ENCODE measurements at regions of chr5 and their contacts with region 1.

Region 1: GRCh38 chr5:175729829-175730277 is 72.0 kb downstream of the HRH2 start:
- DNase-seq: peak; percentile 66 to 78 (median 68)
- H3K4me3 ChIP-seq: no peak overlapping the region
- H3K4me3 Mint-ChIP-seq: peak overlapping the region in 1 of 2 donors; percentile 57
- H3K27ac ChIP-seq: no peak overlapping the region
- H3K27ac Mint-ChIP-seq: peak overlapping the region in 1 of 7 donors; percentile 9
- H3K4me1 ChIP-seq: peaks cover 0 to 5% of the 10 kb centered on the region in 2 donors
- H3K4me1 Mint-ChIP-seq: peaks cover 6% of the 10 kb centered on the region
- H3K27me3 ChIP-seq: peaks cover 0 to 12% of the 10 kb centered on the region in 2 donors
- H3K27me3 Mint-ChIP-seq: peaks cover 23 to 41% (median 25%) of the 10 kb centered on the region in 3 donors
- CTCF ChIP-seq: peak; percentile 93

Region 2: DNA sequence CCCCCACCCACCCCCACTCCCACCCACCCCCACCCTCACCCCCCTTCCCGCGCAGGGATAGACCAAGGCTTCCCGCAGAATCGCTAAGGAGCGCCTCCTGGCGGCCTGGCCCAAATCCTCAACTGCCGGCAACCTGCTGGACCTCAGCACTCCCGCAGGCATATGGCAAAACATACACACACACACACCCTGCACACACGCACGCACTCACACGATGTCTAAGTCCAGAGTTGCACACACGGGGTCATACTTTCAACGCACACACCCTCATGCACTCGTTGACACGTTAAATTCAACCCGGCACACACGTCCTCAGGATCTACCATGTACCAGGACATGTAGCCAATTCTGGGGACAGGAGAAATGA is 143.2 kb after region 1 on chr5:
- intact Hi-C with region 1: loop called (anchors 10 kb)
- DNase-seq: peak; percentile 15 to 31 (median 31)
- H3K4me3 ChIP-seq: no peak overlapping the region
- H3K4me3 Mint-ChIP-seq: peak overlapping the region; percentile 42 to 80
- H3K27ac ChIP-seq: no peak overlapping the region
- H3K27ac Mint-ChIP-seq: no peak overlapping the region
- H3K4me1 ChIP-seq: peaks cover 14 to 16% of the 10 kb centered on the region in 2 donors
- H3K4me1 Mint-ChIP-seq: peaks cover 11% of the 10 kb centered on the region
- H3K27me3 ChIP-seq: peaks cover 24 to 72% of the 10 kb centered on the region in 2 donors
- H3K27me3 Mint-ChIP-seq: peaks cover 49 to 79% (median 51%) of the 10 kb centered on the region in 3 donors
- CTCF ChIP-seq: peak; percentile 45

Region 3: GRCh38 chr5:176658007-176658599 is 928.2 kb after region 1 on chr5:
- intact Hi-C with region 1: loop called in 1 of 2 experiments (anchors 10 kb)
- DNase-seq: peak; percentile 47 to 62 (median 61)
- H3K4me3 ChIP-seq: peak overlapping the region in 1 of 3 experiments; percentile 76
- H3K4me3 Mint-ChIP-seq: peak overlapping the region; percentile 78 to 92
- H3K27ac ChIP-seq: no peak overlapping the region
- H3K27ac Mint-ChIP-seq: peak overlapping the region in 2 of 7 donors; percentile 75 to 76
- H3K4me1 ChIP-seq: peaks cover 18 to 19% of the 10 kb centered on the region in 2 donors
- H3K4me1 Mint-ChIP-seq: peaks cover 23% of the 10 kb centered on the region
- H3K27me3 ChIP-seq: no peaks in the 10 kb centered on the region
- H3K27me3 Mint-ChIP-seq: peaks cover 3 to 13% (median 7%) of the 10 kb centered on the region in 3 donors
- CTCF ChIP-seq: peak; percentile 92